H1 (cell line): ENCODE measurements at regions of chr11 and their contacts with region 1.

Region 1: GRCh38 chr11:126194121-126194543 is 17.3 kb downstream of the RPUSD4 start:
- DNase-seq: peak in 1 of 2 experiments; percentile 62
- H3K4me3 ChIP-seq: no peak overlapping the region
- H3K27ac ChIP-seq: no peak overlapping the region
- H3K4me1 ChIP-seq: no peaks in the 10 kb centered on the region; a peak in 1 of 7 replicates
- H3K27me3 ChIP-seq: no peaks in the 10 kb centered on the region
- CTCF ChIP-seq: peak in 2 of 3 experiments; percentile 62 to 69; a peak in 3 of 4 replicates
- EP300 ChIP-seq: no peak
- POLR2A ChIP-seq: no peak
- RAD21 ChIP-seq: peak; percentile 93 to 95

Region 2: DNA sequence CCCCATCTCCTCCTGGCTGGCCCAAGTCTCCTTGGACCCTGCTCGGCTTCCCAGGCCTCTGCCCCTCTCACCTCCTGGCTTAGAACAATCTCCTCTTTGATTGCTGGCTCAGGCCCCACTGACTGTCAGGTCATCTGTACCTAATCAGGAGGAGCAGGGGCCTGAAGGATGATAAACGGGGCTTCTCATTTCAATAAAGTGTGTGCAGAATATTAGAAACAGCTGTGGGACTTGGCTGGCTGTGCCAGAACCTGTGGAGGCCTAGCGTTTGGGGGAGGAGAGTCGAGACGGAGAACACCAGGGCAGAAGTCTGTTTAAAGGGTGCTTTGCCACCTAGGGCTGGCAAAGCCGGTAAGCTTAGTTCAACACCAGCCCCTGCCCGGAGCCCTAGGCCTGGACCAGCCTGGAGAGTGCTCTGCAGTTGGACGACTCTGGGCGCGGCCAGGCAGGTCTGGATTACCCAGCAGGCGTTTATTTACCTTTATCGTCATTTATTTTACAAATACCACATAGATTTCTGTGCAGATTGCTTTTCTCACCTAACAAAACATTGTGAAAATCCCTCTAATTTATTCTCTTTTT is 258.4 kb before region 1 on chr11:
- CTCF ChIA-PET with region 1: interaction called, 11 read pairs
- POLR2A ChIA-PET with region 1: no interaction called
- DNase-seq: peak in 1 of 2 experiments; percentile 33
- H3K4me3 ChIP-seq: no peak overlapping the region
- H3K27ac ChIP-seq: no peak overlapping the region
- H3K4me1 ChIP-seq: peaks cover 6 to 14% (median 11%) of the 10 kb centered on the region in 4 experiments
- H3K27me3 ChIP-seq: peaks cover 0 to 6% (median 2%) of the 10 kb centered on the region in 4 experiments; a peak in 2 of 7 replicates
- CTCF ChIP-seq: no peak
- EP300 ChIP-seq: no peak
- POLR2A ChIP-seq: no peak
- RAD21 ChIP-seq: no peak

Region 3: DNA sequence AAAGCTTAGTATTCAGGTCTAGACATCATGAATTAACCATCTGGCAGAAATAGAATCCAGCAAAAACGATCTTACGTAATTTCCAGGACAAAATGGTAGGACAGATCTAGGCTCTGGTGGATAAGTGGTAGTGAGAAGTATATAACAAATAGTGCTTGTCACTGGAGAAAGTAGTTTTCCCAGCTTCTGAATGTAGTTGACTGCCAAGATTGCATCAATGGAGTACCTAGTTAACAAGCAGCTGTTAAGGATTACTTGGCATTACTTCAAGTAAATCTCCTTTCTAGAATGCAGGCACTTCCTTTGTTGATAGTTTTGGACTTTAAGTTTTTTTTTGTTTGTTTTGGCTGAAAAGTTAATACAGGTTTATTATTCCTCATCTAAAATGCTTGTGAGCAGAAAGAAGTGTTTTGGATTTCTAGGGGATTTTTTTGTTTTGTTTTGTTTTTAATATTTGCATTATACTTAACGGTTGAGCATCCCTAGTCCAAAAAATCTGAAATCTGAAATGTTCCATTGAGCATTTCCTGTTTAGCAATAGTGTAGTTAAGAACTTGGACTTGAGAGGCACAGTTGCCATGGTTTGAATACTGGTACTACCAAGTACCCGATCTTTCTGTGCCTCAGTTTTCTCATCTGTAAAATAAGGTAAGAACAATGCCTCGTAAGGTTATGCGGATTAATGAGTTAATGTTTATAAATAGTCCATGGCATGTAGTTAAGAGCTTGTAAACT is 37.8 kb after region 1 on chr11:
- CTCF ChIA-PET with region 1: no interaction called
- POLR2A ChIA-PET with region 1: no interaction called
- DNase-seq: no peak
- H3K4me3 ChIP-seq: no peak overlapping the region
- H3K27ac ChIP-seq: no peak overlapping the region
- H3K4me1 ChIP-seq: no peaks in the 10 kb centered on the region; a peak in 1 of 7 replicates
- H3K27me3 ChIP-seq: no peaks in the 10 kb centered on the region
- CTCF ChIP-seq: no peak
- EP300 ChIP-seq: no peak
- POLR2A ChIP-seq: no peak
- RAD21 ChIP-seq: no peak

Region 4: DNA sequence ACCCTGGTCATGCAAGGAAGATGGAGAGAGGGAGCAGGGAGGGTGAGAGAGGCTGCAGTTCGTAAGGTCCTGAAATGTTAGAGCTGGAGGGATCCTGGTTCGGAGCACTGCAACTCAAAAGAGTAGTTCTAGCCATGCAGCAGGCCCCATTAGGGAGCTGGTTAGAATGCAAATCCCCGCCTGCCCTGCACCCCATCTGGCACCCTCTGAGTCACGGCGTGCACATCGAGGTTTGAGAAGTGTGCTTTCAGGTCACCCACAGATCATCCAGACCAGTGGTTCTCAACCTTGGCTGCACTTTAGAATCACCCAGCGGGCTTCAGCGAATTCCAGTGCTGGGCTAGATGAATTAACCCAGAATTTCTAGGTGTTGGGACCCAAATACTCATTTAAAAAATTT is 209.5 kb after region 1 on chr11:
- CTCF ChIA-PET with region 1: no interaction called
- POLR2A ChIA-PET with region 1: no interaction called
- DNase-seq: no peak
- H3K4me3 ChIP-seq: no peak overlapping the region
- H3K27ac ChIP-seq: no peak overlapping the region
- H3K4me1 ChIP-seq: peaks cover 2 to 15% (median 7%) of the 10 kb centered on the region in 4 experiments; a peak in 6 of 7 replicates
- H3K27me3 ChIP-seq: no peaks in the 10 kb centered on the region
- CTCF ChIP-seq: no peak
- EP300 ChIP-seq: no peak
- POLR2A ChIP-seq: no peak
- RAD21 ChIP-seq: no peak